Activated CD4-positive, alpha-beta T cell treated with anti-CD3 and anti-CD28 coated beads for 36 hours (primary cell): ENCODE measurements at regions of chr6 and their contacts with region 1.

Region 1: DNA sequence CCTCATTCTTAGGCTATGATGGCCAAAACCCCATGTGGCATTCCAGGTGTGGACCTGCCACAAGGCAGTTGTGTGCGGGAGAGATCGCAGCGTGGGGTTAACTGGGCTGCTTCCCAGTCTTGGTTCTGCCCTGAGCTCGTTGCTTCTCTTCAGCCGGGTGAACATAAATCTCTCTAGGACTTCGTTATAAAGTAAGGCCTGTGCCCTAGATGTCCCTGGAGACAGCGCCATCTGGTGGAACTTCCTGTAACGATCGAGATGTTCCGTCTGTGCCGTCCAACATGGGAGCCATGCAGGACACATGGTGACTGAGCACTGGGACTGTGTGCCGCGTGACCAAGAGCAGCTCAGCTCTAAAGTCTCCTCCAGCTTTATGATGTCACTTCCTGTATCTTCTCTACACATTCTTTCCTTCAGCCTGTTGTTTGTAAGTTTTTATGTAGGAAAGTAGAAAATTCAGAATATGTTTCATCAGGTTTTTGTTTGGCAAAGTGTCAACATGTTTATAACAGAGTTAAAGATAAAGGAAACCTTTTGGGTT is 26.8 kb upstream of the RPP40 start:
- DNase-seq: peak; percentile 92
- ATAC-seq: peak; percentile 98
- H3K4me3 Mint-ChIP-seq: no peak overlapping the region
- H3K27ac Mint-ChIP-seq: peak overlapping the region; percentile 76
- H3K4me1 Mint-ChIP-seq: peaks cover 15% of the 10 kb centered on the region
- H3K27me3 Mint-ChIP-seq: peaks cover 4% of the 10 kb centered on the region

Region 2: DNA sequence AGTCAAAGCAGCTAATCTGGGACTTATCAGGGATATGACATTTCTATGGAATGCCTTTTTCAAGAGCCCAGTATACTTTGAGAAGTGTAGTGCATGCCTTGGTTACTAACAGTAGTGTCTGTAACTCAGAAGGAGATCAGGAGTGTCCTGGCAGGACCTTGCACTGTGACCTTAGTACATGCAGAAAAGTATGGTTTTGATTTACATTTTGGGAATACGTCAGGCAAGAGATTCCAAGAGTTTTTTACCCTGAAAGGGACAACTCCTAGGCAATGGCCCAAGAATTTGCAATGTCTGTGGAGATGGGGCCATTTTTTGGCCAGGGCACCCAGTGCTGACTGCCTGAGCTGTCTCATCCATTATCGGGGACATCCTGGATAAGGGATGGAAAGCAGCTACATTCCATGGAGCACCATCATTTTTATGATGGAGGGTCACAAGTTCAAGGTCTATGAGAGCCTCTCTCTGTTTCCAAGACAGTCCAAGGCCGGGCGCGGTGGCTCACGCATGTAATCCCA is 1101.3 kb before region 1 on chr6:
- CTCF ChIA-PET with region 1: no interaction called
- POLR2A ChIA-PET with region 1: no interaction called
- intact Hi-C with region 1: loop called in 1 of 2 experiments (anchors 5 kb)
- DNase-seq: no peak
- ATAC-seq: no peak
- H3K4me3 Mint-ChIP-seq: no peak overlapping the region
- H3K27ac Mint-ChIP-seq: no peak overlapping the region
- H3K4me1 Mint-ChIP-seq: no peaks in the 10 kb centered on the region
- H3K27me3 Mint-ChIP-seq: peaks cover 3% of the 10 kb centered on the region

Region 3: DNA sequence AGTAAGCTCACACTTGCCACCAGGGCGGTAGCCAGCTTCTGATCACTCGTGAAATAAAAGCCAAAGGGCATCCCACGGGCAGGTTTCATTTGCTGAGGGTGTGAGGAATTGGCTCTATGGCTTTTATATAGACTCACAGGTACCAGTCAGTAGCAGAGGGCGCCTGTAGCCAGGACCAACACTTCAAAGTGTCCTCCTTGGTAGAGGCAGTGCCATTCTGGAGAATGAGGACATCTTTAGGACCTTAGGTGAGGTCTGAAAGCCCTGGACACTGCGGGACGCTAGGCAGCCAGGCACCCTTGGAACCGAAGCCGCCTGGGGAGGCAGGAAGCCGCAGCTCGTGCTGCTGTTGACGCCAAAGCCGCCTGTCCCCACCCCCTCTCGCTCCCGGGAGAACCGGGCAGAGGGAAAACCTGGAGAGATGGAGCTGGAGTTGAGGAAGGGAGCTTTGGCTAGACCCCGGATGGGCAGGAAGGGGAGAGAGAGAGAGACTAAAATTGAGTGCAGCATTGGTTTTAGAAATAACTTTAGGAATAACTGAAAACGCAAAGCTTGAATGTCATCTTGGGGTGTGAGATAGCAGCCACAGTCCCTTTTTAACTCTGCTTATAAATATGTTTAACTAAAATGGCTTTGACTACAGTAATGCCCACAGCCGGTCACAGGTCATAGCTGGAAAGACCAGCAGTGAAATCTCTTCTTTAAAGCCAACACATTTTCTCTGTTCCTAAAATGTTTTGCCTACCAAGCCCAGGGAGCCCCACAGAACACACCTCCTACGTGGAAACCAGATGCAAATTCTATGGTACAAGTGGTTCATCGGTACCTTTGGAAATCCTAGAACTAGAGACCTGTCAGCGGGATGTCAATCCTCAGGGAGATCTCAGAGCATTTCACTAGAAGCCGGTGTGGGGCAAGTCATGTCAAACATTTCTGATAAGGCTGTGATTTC is 383.0 kb before region 1 on chr6:
- CTCF ChIA-PET with region 1: no interaction called
- POLR2A ChIA-PET with region 1: no interaction called
- intact Hi-C with region 1: no loop called
- DNase-seq: peak; percentile 53
- ATAC-seq: peak; percentile 49
- H3K4me3 Mint-ChIP-seq: no peak overlapping the region
- H3K27ac Mint-ChIP-seq: peak overlapping the region; percentile 59
- H3K4me1 Mint-ChIP-seq: peaks cover 11% of the 10 kb centered on the region
- H3K27me3 Mint-ChIP-seq: peaks cover 44% of the 10 kb centered on the region

Region 4: DNA sequence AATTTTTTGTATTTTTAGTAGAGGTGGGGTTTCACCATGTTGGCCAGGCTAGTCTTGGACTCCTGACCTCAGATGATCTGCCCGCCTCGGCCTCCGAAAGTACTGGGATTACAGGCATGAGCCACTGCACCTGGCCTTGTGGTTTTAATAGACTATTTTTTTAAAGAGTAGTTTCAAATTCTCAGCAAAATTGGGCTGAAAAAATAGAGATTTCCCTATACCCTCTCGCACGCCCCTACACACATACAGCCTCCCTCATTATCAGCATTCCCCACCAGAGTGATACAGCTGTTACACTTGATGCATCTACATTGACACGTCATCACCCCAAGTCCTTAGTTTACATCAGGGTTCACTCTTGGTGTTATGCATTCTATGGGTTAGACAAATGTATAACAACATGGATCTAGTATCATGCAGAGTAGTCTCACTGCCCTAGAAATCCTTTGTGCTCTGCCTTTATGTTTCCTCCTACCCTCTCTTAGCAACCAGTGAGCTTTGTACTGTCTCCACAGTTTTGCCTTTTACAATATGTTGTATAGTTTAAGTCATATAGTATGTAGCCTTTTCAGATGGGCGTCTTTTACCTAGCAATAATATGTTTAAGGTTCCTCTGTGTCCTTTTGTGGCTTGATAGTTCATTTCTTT is 150.8 kb before region 1 on chr6:
- CTCF ChIA-PET with region 1: no interaction called
- POLR2A ChIA-PET with region 1: no interaction called
- intact Hi-C with region 1: loop called in 1 of 2 experiments (anchors 5 kb)
- DNase-seq: no peak
- ATAC-seq: no peak
- H3K4me3 Mint-ChIP-seq: no peak overlapping the region
- H3K27ac Mint-ChIP-seq: no peak overlapping the region
- H3K4me1 Mint-ChIP-seq: peaks cover 21% of the 10 kb centered on the region
- H3K27me3 Mint-ChIP-seq: no peaks in the 10 kb centered on the region

Region 5: GRCh38 chr6:4901386-4902061 is 129.1 kb before region 1 on chr6:
- CTCF ChIA-PET with region 1: no interaction called
- POLR2A ChIA-PET with region 1: no interaction called
- intact Hi-C with region 1: no loop called
- DNase-seq: no peak
- ATAC-seq: no peak
- H3K4me3 Mint-ChIP-seq: no peak overlapping the region
- H3K27ac Mint-ChIP-seq: no peak overlapping the region
- H3K4me1 Mint-ChIP-seq: peaks cover 15% of the 10 kb centered on the region
- H3K27me3 Mint-ChIP-seq: no peaks in the 10 kb centered on the region

Region 6: GRCh38 chr6:5020142-5020541 is 10.5 kb before region 1 on chr6:
- CTCF ChIA-PET with region 1: interaction called, 12 read pairs
- POLR2A ChIA-PET with region 1: no interaction called
- intact Hi-C with region 1: no loop called
- DNase-seq: no peak
- ATAC-seq: no peak
- H3K4me3 Mint-ChIP-seq: no peak overlapping the region
- H3K27ac Mint-ChIP-seq: no peak overlapping the region
- H3K4me1 Mint-ChIP-seq: no peaks in the 10 kb centered on the region
- H3K27me3 Mint-ChIP-seq: no peaks in the 10 kb centered on the region

Region 7: GRCh38 chr6:5041955-5042354 is 11.3 kb after region 1 on chr6:
- CTCF ChIA-PET with region 1: interaction called, 13 read pairs
- POLR2A ChIA-PET with region 1: no interaction called
- intact Hi-C with region 1: no loop called
- DNase-seq: no peak
- ATAC-seq: no peak
- H3K4me3 Mint-ChIP-seq: no peak overlapping the region
- H3K27ac Mint-ChIP-seq: no peak overlapping the region
- H3K4me1 Mint-ChIP-seq: no peaks in the 10 kb centered on the region
- H3K27me3 Mint-ChIP-seq: no peaks in the 10 kb centered on the region